A549 (cell line): ENCODE measurements at regions of chr1 and their contacts with region 1.

Region 1: DNA sequence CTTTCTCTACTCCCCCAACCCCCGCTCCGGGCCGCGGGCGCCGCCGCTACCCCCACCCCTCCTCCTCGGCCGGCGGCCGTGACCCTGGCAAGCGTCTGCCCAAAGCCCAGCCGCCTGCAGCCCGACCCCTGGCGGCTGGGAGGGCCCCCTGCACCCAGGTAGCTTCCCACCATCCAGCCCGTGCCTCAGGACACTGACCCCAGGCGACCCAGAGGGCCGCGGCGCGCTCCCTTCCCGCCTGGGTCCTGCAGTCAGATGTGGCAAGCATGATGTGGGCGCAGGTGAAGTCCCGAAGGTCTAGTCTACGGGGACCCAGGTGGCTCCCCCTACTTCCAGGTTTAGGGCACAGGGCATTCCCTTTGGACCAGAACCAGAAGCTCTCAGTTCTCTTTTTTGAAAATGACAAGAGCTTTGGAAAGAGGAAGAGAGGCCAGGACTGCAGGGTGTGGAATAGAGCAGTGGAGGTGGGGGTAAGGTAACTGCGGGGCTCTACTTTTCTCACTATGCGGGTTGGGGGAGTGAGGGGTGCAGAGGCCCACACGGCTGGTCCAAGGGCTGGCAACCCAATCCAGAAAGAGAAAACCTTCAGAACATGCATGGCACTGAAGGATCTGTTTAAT is at the start of gene DENND4B:
- DNase-seq: peak; percentile 83 to 98
- ATAC-seq: peak; percentile 93 to 95
- H3K4me3 ChIP-seq: peak within 1 kb of the TSS; percentile 99
- H3K27ac ChIP-seq: peak within 1 kb of the TSS; percentile 98 to 99
- H3K4me1 ChIP-seq: peaks cover 16% of the 10 kb centered on the region
- CTCF ChIP-seq: peak; percentile 91
- EP300 ChIP-seq: no peak
- POLR2A ChIP-seq: no peak
- RAD21 ChIP-seq: peak; percentile 35 to 52; a peak in 4 of 5 replicates
- polyA plus RNA-seq, gene DENND4B: 18.7 and 24.1 TPM in 2 replicates

Region 2: DNA sequence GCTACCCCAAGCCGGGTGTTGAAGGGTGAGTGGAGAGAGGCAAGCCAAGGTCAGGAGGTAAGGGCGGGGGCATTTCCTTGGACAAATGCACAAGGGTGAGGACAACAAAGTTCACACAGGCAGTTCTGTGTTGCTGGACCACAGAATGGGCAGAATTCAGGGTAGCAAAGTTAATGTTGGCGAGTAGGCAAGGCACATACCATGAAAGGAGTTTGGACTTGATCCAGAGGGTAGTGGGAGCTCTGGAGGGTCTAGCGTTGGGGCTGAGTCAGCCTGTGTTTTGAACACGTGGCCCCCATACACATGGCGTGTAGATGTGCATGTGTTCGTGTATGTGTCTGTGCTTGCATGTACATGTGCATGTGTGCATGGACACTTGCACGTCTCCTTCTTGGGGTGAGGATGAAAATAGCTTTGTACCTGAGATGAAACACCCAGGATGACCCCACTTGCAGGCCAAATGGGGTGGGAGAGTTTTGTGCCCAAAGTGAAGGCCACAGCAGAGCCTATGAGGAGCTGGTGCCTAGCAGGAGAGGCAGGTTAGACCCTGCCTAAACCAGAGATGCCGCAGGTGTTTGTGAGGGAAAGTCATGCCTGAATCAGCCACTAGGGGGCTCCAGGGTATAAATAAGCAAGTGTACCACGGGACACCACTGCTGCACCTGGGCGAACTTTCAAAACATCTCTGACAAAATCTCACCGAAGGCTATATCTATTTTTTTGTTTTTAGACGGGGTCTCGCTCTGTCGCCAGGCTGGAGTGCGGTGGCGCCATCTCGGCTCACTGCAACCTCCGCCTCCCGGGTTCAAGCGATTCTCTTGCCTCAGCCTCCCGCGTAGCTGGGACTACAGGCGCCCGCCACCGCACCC is 149.7 kb before region 1 on chr1:
- CTCF ChIA-PET with region 1: interaction called, 28 read pairs
- POLR2A ChIA-PET with region 1: interaction called, 3 read pairs
- DNase-seq: peak; percentile 70 to 86
- ATAC-seq: peak; percentile 58 to 83; a peak in 5 of 6 replicates
- H3K4me3 ChIP-seq: no peak overlapping the region
- H3K27ac ChIP-seq: no peak overlapping the region
- H3K4me1 ChIP-seq: no peaks in the 10 kb centered on the region
- CTCF ChIP-seq: peak; percentile 75
- EP300 ChIP-seq: no peak
- POLR2A ChIP-seq: no peak
- RAD21 ChIP-seq: peak; percentile 77 to 81

Region 3: DNA sequence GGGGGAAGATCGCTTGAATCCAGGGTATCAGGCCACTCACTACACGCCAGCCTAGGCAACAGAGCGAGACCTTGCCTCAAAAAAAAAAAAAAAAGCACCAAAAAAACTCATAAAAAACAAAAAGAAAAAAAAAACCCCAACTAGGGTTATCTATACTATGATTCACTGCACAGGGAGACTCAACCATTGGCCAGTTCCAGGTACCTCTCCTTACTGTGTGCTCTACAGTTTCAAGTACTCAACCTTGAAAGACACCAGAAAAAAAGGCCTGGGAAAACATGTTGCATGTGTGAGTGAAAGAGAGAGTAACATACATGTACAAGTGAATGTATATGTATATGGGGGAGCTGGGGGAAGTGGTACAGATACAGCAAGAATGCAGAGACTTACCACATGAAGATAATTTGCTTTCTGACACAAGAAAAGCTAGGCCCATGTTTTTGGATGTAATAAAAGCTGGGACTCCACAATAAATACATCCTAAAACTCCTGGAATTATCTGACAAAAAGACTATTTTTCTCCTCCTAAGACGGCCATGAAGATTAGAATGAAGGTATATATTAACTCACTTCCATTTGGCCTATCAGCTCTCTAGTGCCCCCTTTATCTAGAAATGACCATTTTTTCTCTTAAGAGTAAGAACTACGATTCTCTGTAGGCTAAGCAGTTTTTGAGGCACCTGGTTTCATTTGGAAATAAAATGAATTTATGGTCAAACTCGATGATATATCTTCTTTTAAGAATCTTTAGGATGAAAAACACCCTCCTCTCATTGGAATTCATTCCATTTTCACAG is 119.4 kb before region 1 on chr1:
- CTCF ChIA-PET with region 1: interaction called, 11 read pairs
- POLR2A ChIA-PET with region 1: no interaction called
- DNase-seq: no peak
- ATAC-seq: peak in 1 of 2 experiments; percentile 59; a peak in 2 of 6 replicates
- H3K4me3 ChIP-seq: no peak overlapping the region
- H3K27ac ChIP-seq: no peak overlapping the region
- H3K4me1 ChIP-seq: no peaks in the 10 kb centered on the region
- CTCF ChIP-seq: no peak
- EP300 ChIP-seq: no peak
- POLR2A ChIP-seq: no peak
- RAD21 ChIP-seq: no peak

Region 4: DNA sequence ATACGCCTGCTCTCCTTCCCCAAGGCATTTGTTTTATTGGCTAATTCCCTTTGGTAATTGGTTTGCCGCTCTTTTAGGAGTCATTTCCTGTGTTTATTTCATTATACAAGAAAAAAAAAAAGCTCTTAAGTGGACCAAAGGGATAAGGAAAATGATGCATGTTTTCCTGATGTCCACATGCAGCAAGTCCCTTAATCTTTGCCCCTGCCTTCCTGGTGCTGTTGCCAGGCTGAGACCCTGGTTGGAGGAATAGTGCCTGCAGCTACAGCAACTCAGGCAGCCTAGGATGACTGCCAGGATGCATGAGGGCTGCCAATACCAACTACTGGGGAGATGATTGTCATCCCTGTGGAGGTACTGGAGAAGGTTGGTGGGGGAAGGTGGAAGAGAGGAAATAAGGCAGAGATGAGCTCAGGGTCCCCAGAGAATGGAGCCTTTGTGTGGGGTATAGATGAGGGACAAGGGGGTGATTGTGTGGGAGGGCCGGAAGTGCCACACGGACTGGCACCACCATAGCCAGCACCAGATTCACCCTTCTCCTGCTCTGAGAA is 17.9 kb before region 1 on chr1:
- CTCF ChIA-PET with region 1: interaction called, 39 read pairs
- POLR2A ChIA-PET with region 1: interaction called, 6 read pairs
- DNase-seq: no peak
- ATAC-seq: no peak
- H3K4me3 ChIP-seq: no peak overlapping the region
- H3K27ac ChIP-seq: no peak overlapping the region
- H3K4me1 ChIP-seq: peaks cover 5% of the 10 kb centered on the region; the same call in 1 of the 3 replicates
- CTCF ChIP-seq: no peak
- EP300 ChIP-seq: no peak
- POLR2A ChIP-seq: no peak
- RAD21 ChIP-seq: no peak

Region 5: DNA sequence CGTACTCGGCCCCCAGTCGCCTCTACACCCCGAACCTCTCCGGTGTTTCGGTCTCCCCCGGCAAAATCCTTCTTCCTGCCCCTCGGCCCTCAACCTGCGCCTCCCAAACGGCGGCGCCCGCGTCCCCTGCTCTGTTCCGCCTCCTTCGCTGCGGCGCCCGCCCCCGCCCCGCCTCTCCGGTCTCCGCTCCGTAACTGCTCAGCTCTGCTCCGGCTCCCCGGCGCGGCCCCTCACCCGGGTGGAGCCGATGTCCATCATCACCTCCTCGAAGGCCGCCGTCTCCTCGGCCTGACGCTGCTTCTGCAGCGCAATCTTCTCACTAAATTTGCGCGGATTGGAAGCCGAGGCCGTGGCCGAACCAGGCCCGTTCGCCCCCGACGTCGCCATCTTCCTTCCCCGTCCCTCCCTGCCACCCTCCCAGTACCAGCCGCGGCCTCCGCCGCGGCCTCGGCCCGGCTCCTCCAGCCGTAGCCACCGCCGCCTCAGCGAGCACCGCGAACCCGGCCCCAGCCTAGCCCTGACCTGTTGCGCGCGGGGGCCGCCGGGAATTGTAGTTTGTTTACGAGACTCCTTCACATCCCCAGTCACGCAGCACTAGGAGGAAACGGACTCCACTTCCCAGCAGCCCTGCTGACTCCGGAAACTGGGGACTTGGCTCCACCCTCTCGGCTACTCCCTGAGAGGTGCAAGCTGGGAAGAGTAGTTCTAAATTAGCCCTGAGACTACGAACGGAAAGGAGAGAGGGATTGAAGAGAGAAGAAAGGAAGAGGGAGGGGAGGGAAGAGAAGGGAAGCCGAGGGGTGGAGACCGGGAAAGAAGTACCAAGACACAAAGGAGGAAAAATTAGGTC is 11.6 kb after region 1 on chr1 and contains the start of gene CRTC2:
- CTCF ChIA-PET with region 1: interaction called, 75 read pairs
- POLR2A ChIA-PET with region 1: interaction called, 14 read pairs
- DNase-seq: peak; percentile 98 to 99
- ATAC-seq: peak; percentile 85 to 90
- H3K4me3 ChIP-seq: peak within 1 kb of the TSS; percentile 94
- H3K27ac ChIP-seq: peak within 1 kb of the TSS; percentile 92 to 95
- H3K4me1 ChIP-seq: peaks cover 32% of the 10 kb centered on the region
- CTCF ChIP-seq: no peak
- EP300 ChIP-seq: no peak
- POLR2A ChIP-seq: peak; percentile 47
- RAD21 ChIP-seq: 0 out of 5 replicates have a peak, but pooled peaks of 1 of the 2 experiments have one; percentile 13
- polyA plus RNA-seq, gene CRTC2: 19.7 and 23.9 TPM in 2 replicates

Region 6: DNA sequence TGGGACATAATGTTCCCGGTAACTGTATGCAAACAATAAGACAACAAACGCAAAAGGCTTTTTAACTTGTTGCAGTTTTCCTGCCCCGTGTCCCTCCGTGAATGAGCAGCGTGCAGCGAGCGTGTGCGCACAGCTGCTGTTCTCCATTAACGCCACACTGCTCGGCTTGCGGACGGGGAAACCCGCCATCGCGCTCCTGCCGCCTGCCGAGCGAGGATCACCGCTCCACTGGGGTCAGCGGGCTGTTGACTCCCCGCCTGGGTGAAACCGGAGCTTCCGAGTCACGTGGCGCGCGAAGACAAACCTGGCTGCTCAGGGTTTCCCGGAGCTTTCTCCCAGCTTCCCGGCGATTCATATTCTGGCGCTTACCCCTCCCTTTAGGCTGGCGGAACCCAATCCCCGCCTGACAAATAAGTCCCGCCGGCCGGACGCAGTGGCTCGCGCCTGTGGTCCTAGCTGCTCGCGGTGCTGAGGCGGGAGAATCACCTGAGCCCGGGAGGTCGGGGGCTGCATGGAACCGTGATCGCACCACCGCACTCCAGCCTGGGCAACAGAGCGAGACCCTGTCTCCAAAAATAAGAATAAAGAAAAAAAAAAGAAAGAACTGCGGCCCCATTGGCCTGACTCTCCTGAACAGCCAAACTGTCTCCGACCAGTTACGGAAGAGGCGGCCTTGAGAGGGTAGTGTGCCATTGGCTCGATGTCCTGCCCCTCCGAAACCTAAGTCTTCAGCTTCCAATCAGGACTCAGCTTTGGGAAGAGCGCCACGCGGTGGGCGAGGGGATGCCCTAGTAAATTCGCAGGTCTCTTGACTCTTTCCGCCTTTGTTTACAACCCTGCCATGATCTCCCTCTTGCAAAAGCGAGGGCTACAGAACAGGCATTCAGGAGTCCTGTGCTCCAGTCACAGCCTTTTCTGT is 20.6 kb after region 1 on chr1 and contains the start of gene CREB3L4:
- CTCF ChIA-PET with region 1: interaction called, 20 read pairs
- POLR2A ChIA-PET with region 1: interaction called, 16 read pairs
- DNase-seq: peak; percentile 92 to 99
- ATAC-seq: peak; percentile 79 to 89
- H3K4me3 ChIP-seq: peak within 1 kb of the TSS; percentile 64
- H3K27ac ChIP-seq: peak within 1 kb of the TSS; percentile 90 to 92
- H3K4me1 ChIP-seq: peaks cover 19% of the 10 kb centered on the region
- CTCF ChIP-seq: peak; percentile 29; the same call in 1 of the 3 replicates
- EP300 ChIP-seq: no peak
- POLR2A ChIP-seq: peak; percentile 87
- RAD21 ChIP-seq: no peak; a peak in 1 of 5 replicates
- polyA plus RNA-seq, gene CREB3L4: 14.3 and 18.0 TPM in 2 replicates

Region 7: GRCh38 chr1:153977250-153978240 is 30.8 kb after region 1 on chr1 and contains the start of gene JTB:
- CTCF ChIA-PET with region 1: interaction called, 12 read pairs
- POLR2A ChIA-PET with region 1: interaction called, 8 read pairs
- DNase-seq: peak; percentile 82 to 90
- ATAC-seq: peak; percentile 95 to 98
- H3K4me3 ChIP-seq: peak within 1 kb of the TSS; percentile 92
- H3K27ac ChIP-seq: peak within 1 kb of the TSS; percentile 88 to 95
- H3K4me1 ChIP-seq: peaks cover 18% of the 10 kb centered on the region
- CTCF ChIP-seq: no peak
- EP300 ChIP-seq: no peak
- POLR2A ChIP-seq: peak; percentile 56
- RAD21 ChIP-seq: no peak
- polyA plus RNA-seq, gene JTB: 162 and 178 TPM in 2 replicates